ENCODE measurements at regions of chr6 and their contacts with region 1.

Region 1: DNA sequence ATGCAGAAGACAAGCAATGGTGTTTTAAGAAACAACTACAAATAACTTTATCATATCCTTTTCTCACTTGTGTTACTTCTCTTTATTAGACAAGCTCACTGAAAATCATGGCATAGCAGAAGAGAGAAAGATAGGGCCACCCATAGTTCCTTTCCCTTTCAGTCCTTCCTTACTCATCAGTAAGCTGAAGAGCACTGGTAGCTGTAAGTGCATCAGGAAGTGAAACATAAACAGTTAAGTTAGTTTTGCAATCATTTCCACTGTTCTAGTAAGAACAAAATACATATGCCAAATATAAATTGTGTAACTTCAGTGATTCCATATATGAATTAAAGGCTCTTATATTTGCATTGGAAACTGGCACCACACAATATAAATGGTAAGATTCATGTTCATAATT is 220.1 kb downstream of the HACE1 start:
- DNase-seq: peak; percentile 81
- H3K4me3 Mint-ChIP-seq: peak overlapping the region; percentile 17
- H3K27ac Mint-ChIP-seq: peak overlapping the region; percentile 94
- H3K4me1 Mint-ChIP-seq: peaks cover 61% of the 10 kb centered on the region
- H3K27me3 Mint-ChIP-seq: no peaks in the 10 kb centered on the region
- CTCF ChIP-seq: no peak

Region 2: GRCh38 chr6:104606361-104606760 is 33.3 kb before region 1 on chr6:
- CTCF ChIA-PET with region 1: no interaction called
- POLR2A ChIA-PET with region 1: no interaction called
- intact Hi-C with region 1: no loop called
- DNase-seq: no peak
- H3K4me3 Mint-ChIP-seq: no peak overlapping the region
- H3K27ac Mint-ChIP-seq: no peak overlapping the region
- H3K4me1 Mint-ChIP-seq: peaks cover 8% of the 10 kb centered on the region
- H3K27me3 Mint-ChIP-seq: no peaks in the 10 kb centered on the region
- CTCF ChIP-seq: no peak

Region 3: GRCh38 chr6:104623052-104623690 is 16.5 kb before region 1 on chr6:
- CTCF ChIA-PET with region 1: interaction called, 4 read pairs
- POLR2A ChIA-PET with region 1: interaction called, 17 read pairs
- intact Hi-C with region 1: loop called (anchors 2 kb)
- DNase-seq: peak; percentile 48
- H3K4me3 Mint-ChIP-seq: no peak overlapping the region
- H3K27ac Mint-ChIP-seq: peak overlapping the region; percentile 71
- H3K4me1 Mint-ChIP-seq: peaks cover 42% of the 10 kb centered on the region
- H3K27me3 Mint-ChIP-seq: no peaks in the 10 kb centered on the region
- CTCF ChIP-seq: no peak

Region 4: GRCh38 chr6:104700371-104701186 is 60.9 kb after region 1 on chr6:
- CTCF ChIA-PET with region 1: no interaction called
- POLR2A ChIA-PET with region 1: no interaction called
- intact Hi-C with region 1: no loop called
- DNase-seq: no peak
- H3K4me3 Mint-ChIP-seq: no peak overlapping the region
- H3K27ac Mint-ChIP-seq: no peak overlapping the region
- H3K4me1 Mint-ChIP-seq: no peaks in the 10 kb centered on the region
- H3K27me3 Mint-ChIP-seq: no peaks in the 10 kb centered on the region
- CTCF ChIP-seq: no peak

Measured in MCF 10A (cell line).